ENCODE measurements at regions of chr1 and their contacts with region 1.

Region 1: GRCh38 chr1:209565759-209566678 is 17.5 kb upstream of the CAMK1G start:
- DNase-seq: peak; percentile 45 to 85
- ATAC-seq: peak; percentile 81 to 91 (median 88)
- H3K4me3 ChIP-seq: no peak overlapping the region
- H3K4me3 Mint-ChIP-seq: no peak overlapping the region
- H3K27ac ChIP-seq: no peak overlapping the region
- H3K27ac Mint-ChIP-seq: no peak overlapping the region
- H3K4me1 ChIP-seq: no peaks in the 10 kb centered on the region
- H3K4me1 Mint-ChIP-seq: peaks cover 6 to 7% of the 10 kb centered on the region in 2 donors
- H3K27me3 ChIP-seq: no peaks in the 10 kb centered on the region
- H3K27me3 Mint-ChIP-seq: peaks cover 27 to 32% of the 10 kb centered on the region in 2 donors
- CTCF ChIP-seq: peak; percentile 70

Region 2: GRCh38 chr1:208652296-208653160 is 913.5 kb before region 1 on chr1:
- intact Hi-C with region 1: loop called (anchors 10 kb)
- DNase-seq: peak in 1 of 2 donors; percentile 46
- ATAC-seq: peak in 2 of 3 donors; percentile 58 to 70
- H3K4me3 ChIP-seq: no peak overlapping the region
- H3K4me3 Mint-ChIP-seq: no peak overlapping the region
- H3K27ac ChIP-seq: no peak overlapping the region
- H3K27ac Mint-ChIP-seq: no peak overlapping the region
- H3K4me1 ChIP-seq: no peaks in the 10 kb centered on the region
- H3K4me1 Mint-ChIP-seq: no peaks in the 10 kb centered on the region
- H3K27me3 ChIP-seq: peaks cover 2% of the 10 kb centered on the region
- H3K27me3 Mint-ChIP-seq: peaks cover 3 to 22% of the 10 kb centered on the region in 2 donors
- CTCF ChIP-seq: peak; percentile 60

Region 3: GRCh38 chr1:209627732-209628196 is 61.7 kb after region 1 on chr1:
- intact Hi-C with region 1: loop called (anchors 5 kb)
- DNase-seq: peak; percentile 70 to 82
- ATAC-seq: peak; percentile 80 to 94 (median 91)
- H3K4me3 ChIP-seq: no peak overlapping the region
- H3K4me3 Mint-ChIP-seq: no peak overlapping the region
- H3K27ac ChIP-seq: no peak overlapping the region
- H3K27ac Mint-ChIP-seq: no peak overlapping the region
- H3K4me1 ChIP-seq: peaks cover 7% of the 10 kb centered on the region
- H3K4me1 Mint-ChIP-seq: no peaks in the 10 kb centered on the region
- H3K27me3 ChIP-seq: no peaks in the 10 kb centered on the region
- H3K27me3 Mint-ChIP-seq: peaks cover 0 to 6% of the 10 kb centered on the region in 2 donors
- CTCF ChIP-seq: peak; percentile 90